Body of pancreas (tissue), 4 donors: ENCODE measurements at regions of chr7 and their contacts with region 1.

Region 1: GRCh38 chr7:22488643-22489462 is 11.1 kb downstream of the STEAP1B start:
- DNase-seq: peak; percentile 73 to 81 (median 76)
- ATAC-seq: peak; percentile 85
- H3K4me3 ChIP-seq: no peak overlapping the region
- H3K27ac ChIP-seq: no peak overlapping the region
- H3K4me1 ChIP-seq: no peaks in the 10 kb centered on the region
- H3K27me3 ChIP-seq: no peaks in the 10 kb centered on the region
- CTCF ChIP-seq: peak; percentile 84 to 93 (median 88)
- POLR2A ChIP-seq: no peak

Region 2: DNA sequence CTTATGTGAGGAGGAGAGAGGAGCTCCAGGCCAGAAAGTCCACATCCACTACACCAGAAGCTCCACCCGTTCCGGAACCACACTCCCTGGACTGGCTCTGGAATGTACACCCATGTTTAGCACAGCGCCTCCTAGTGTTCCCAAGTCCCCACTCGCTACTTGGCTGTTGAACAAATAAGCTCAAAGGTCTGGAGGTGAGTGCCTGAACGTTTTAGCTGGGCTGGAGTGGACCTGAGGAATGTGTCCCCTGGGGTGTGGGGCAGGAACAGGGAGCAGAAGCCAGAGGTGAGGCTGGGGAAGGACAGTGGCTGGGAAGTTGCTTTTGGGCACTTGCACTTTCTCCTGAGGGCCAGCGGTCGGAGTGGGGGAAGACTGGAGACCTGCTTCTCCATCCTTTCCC is 379.1 kb before region 1 on chr7:
- intact Hi-C with region 1: loop called (anchors 5 kb)
- DNase-seq: peak; percentile 32 to 60 (median 44)
- ATAC-seq: peak; percentile 26
- H3K4me3 ChIP-seq: no peak overlapping the region
- H3K27ac ChIP-seq: no peak overlapping the region
- H3K4me1 ChIP-seq: peaks cover 10% of the 10 kb centered on the region
- H3K27me3 ChIP-seq: no peaks in the 10 kb centered on the region
- CTCF ChIP-seq: peak in 3 of 7 experiments; percentile 3 to 23 (median 19)
- POLR2A ChIP-seq: no peak